ENCODE measurements at regions of chr7 and their contacts with region 1.

Region 1: GRCh38 chr7:134432296-134433152 is 26.4 kb downstream of the AKR1B1 start:
- DNase-seq: peak; percentile 49 to 84 (median 76)
- H3K4me3 ChIP-seq: peak overlapping the region; percentile 1 to 69 (median 51)
- H3K27ac ChIP-seq: peak overlapping the region in 58 of 59 donors; percentile 12 to 91 (median 74)
- H3K27me3 ChIP-seq: no peaks in the 10 kb centered on the region
- CTCF ChIP-seq: peak; percentile 62 to 97 (median 85)

Region 2: DNA sequence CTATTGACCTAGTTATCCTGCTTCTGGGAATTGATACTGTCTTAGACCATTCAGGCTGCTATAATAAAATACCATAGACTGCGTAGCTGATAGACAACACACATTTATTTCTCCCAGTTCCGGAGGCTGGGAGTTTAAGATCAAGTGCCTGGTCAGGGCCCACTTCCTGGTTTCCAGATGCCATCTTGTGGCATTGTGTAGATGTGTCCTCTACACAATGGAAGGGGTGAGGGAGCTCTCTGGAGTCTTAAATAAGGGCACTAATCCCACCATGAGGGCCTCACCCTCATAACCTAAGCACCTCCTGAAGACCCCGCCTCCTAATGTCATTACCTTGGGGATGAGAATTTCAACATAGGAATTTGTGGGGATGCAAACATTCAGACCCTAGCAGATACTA is 178.2 kb before region 1 on chr7:
- intact Hi-C with region 1: no loop called
- DNase-seq: no peak
- H3K4me3 ChIP-seq: no peak overlapping the region
- H3K27ac ChIP-seq: no peak overlapping the region
- H3K27me3 ChIP-seq: no peaks in the 10 kb centered on the region
- CTCF ChIP-seq: peak in 5 of 56 donors; percentile 4 to 18 (median 11)

Region 3: GRCh38 chr7:134502463-134503371 is 70.2 kb after region 1 on chr7:
- intact Hi-C with region 1: no loop called
- DNase-seq: peak in 1 of 10 donors; percentile 14
- H3K4me3 ChIP-seq: no peak overlapping the region
- H3K27ac ChIP-seq: no peak overlapping the region
- H3K27me3 ChIP-seq: no peaks in the 10 kb centered on the region
- CTCF ChIP-seq: no peak

Region 4: DNA sequence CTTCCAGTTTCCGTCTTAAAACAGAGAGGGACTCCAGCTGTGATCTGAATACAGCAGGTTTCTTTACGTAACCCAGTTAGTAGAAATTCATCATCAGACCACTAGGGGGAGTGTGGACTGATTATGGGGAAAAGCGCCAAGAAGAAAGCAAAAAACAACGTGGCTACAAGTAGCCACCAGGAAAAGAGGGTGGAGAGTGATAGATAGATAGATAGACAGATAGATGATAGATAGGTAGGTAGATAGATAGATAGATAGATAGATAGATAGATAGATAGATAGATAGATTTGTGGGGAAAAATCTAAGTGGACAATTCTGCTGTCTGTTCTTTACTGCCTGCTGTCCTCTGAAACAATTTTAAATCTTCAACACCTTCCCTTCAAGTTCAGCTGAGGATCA is 82.1 kb after region 1 on chr7:
- intact Hi-C with region 1: loop called (anchors 2 to 5 kb)
- DNase-seq: peak in 1 of 10 donors; percentile 11
- H3K4me3 ChIP-seq: no peak overlapping the region
- H3K27ac ChIP-seq: no peak overlapping the region
- H3K27me3 ChIP-seq: no peaks in the 10 kb centered on the region
- CTCF ChIP-seq: peak; percentile 71 to 92 (median 86)

Region 5: DNA sequence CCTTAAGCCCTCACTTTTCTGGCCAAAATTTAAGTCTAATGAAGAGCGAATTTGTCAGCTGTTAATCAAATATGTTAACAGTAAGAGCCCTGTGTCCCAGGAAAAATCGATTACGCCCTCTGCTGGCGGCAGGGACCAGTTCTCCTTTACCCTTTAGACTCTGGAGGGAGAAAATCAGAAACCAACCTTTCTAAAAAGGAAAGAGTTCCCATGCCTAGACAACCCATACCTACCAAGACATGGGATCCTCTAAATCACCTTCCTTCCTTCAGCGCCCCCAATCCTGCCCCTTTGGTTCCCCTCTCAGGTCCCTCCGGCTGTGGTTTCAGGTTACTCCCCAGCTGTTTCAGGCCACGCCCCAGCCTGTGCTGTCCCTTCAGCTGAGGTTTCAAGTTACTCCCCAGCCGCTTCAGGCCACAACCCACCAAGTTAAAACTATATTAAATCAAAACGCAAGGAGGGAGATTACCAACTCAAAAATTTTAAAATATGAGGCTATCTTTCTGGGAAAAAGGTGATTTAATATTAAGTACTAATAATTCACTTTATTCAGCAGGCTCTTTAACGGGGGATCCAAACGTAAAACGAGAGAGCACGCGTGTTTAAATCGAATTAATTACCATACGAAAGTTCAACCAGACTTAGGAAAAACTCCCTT is 115.0 kb after region 1 on chr7:
- intact Hi-C with region 1: loop called in 1 of 2 experiments (anchors 2 kb)
- DNase-seq: peak; percentile 47 to 70 (median 62)
- H3K4me3 ChIP-seq: peak overlapping the region in 23 of 59 donors; percentile 4 to 42 (median 30)
- H3K27ac ChIP-seq: peak overlapping the region in 2 of 59 donors; percentile 7 to 10
- H3K27me3 ChIP-seq: peaks cover 0 to 5% (median 0%) of the 10 kb centered on the region in 45 donors
- CTCF ChIP-seq: peak; percentile 56 to 88 (median 76)

Region 6: DNA sequence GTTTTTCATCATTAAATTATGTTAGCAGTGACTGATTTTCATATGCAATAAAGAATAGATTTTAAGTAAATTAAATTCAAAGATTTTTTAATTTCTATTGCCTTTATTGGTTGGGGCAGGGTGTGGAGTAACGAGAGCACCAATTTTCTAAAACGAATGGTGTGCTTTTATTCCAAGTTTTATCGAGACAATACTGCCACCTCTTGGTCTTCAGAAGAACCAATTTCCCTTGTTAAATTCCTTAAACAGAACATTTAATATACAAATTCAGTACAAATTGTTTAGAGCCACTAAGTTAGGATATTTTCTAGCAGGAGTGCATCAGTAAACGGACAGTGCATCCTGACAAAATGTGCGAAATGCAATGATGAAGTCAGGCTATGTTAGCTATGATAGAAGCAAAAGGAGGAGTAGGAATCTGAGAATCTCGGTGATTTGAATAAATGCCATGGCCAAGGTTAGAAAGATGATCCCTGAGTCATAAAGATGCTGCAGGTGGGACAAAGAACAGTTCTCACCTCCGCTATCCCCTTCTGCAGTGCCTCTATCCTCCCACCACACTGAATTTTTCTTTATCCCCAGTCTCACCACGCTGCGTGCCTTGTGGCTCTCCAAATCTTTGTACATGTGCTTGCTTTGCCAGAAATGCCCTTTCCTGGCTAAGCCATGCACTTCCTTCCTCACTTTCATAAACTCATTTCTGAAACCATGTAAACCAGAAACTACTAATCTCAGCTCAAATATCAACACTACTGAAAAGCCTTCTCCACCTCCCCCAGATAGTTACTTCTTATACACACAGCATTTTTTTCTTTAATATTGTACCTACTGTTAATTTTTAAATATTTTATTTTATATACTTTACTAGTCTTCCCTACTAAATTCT is 521.9 kb after region 1 on chr7:
- intact Hi-C with region 1: loop called in 1 of 2 experiments (anchors 10 kb)
- DNase-seq: no peak
- H3K4me3 ChIP-seq: no peak overlapping the region
- H3K27ac ChIP-seq: peak overlapping the region in 7 of 59 donors; percentile 6 to 49 (median 21)
- H3K27me3 ChIP-seq: no peaks in the 10 kb centered on the region
- CTCF ChIP-seq: peak; percentile 55 to 85 (median 74)

Region 7: DNA sequence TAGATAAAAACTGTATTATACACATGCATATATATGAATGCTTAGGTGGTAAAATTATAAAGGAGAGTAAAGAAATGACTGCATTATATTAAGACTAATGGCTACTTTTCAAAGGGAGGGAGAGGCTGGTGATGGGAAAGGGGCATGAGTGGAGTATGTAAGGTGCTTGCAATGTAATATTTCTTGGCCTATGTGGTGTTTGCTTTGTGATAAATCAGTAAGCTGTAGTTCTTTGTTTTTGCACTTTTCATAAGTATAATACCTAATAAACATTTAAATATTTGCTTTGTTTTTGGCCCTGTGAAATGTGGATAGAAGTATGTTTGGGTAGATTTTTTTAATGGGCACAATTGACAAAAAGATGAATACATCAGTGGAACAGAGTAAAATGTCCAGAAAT is 579.7 kb after region 1 on chr7:
- intact Hi-C with region 1: no loop called
- DNase-seq: no peak
- H3K4me3 ChIP-seq: no peak overlapping the region
- H3K27ac ChIP-seq: no peak overlapping the region
- H3K27me3 ChIP-seq: no peaks in the 10 kb centered on the region
- CTCF ChIP-seq: no peak